Left colon (tissue), 2 donors: ENCODE measurements at regions of chr3 and their contacts with region 1.

Region 1: DNA sequence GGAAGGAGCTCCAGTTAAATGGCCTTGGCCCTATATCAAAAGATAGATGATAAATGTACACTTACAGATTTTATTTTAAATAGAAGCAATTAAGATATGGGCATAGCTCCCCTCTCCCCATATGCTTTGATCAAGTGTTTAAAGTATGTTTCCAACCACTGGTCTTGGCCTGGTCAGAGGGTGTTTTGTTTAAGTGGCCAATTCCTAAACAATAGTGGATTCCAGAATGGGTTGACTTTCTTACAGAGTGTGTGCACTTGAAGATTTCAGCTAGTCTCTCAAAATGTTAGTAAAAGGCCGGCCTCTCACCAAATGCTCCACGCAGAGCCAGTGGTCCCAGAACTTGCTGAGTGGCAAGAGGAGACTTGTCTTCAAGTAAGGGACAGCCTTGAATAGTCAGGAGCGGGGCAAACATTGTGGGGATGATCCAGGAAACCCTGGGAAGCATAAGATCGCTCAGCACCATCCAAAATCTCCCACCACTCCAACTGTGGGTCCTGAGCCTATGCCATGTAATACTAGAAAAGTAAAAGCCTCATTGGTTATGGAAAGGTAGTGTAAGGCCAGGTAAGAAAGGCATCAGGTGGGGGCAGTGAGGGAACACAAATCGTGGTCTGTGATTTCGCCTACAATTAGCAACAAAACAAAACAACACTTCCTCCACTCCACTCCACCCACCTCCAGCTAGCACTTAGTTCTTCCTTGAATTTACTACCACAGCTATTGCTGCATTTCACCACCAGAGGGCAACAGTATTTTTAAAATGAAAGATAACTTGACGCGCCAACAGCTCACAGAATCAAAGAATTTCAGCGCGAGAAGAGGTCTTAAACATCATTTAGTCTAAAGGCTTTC is 4.8 kb downstream of the RARRES1 start:
- DNase-seq: peak in 1 of 2 donors; percentile 53
- ATAC-seq: peak; percentile 9

Region 2: DNA sequence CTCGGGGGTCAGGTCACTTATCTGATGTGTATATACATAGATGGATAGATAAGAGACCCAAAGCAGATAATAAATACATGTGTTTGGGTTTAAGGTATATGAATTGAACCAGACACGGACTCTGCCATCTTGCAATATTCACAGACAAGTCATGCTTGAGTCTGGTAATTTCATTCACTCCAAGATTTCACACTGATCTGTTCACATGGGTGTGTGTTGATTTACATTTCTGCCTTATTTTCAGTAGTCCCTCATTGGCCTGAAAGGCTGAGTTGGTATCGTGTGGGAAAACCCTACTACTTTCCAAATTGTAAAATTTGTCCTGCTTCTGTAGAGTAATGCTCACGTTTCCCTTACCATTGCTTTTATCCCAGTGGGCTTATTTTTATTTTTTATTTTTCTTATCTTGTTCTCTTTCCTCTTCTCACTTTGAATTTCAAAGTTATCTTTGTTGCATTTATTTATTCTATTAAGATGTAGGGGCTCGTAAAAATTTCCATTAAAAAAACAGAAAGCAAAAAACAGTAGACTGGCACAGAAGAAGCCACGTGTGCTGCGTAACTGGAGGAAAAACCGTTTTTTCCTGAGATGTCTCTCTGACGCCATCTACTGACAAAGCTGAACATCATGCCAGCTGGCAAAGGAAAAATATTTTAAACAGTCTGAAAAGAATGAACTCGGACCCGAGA is 63.6 kb after region 1 on chr3:
- intact Hi-C with region 1: loop called in 1 of 2 experiments (anchors 2 kb)
- DNase-seq: no peak
- ATAC-seq: peak; percentile 63

Region 3: DNA sequence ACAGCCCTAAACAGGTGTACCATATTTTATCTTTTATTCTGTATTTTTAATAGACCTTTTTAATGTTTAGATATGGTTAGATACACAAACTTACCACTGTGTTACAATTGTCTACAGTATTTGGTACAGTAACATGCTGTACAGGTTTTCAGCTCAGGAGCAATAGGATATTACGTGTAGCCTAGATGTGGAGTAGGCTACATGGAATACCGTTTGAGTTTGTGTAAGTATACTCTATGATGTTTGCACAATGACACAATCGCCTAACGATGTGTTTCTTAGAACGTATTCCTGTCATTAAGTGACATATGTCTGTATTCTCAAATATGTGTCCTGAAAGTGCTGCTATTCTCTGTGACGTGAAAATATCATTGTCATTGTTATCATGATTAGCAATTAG is 137.1 kb after region 1 on chr3:
- intact Hi-C with region 1: no loop called
- DNase-seq: no peak
- ATAC-seq: no peak